ENCODE measurements at regions of chr2 and their contacts with region 1.

Region 1: GRCh38 chr2:34096562-34097171 is 497.6 kb upstream of the FAM98A start:
- DNase-seq: peak; percentile 32
- ATAC-seq: 0 out of 2 replicates have a peak, but pooled peaks have one; percentile 47
- H3K4me3 ChIP-seq: no peak overlapping the region
- H3K27ac ChIP-seq: no peak overlapping the region
- H3K4me1 ChIP-seq: no peaks in the 10 kb centered on the region
- H3K27me3 ChIP-seq: no peaks in the 10 kb centered on the region
- CTCF ChIP-seq: peak; percentile 15 to 78 (median 53); a peak in 4 of 6 replicates
- POLR2A ChIP-seq: no peak
- RAD21 ChIP-seq: peak; percentile 55

Region 2: GRCh38 chr2:33673937-33674336 is 422.7 kb before region 1 on chr2:
- CTCF ChIA-PET with region 1: no interaction called
- POLR2A ChIA-PET with region 1: no interaction called
- RAD21 ChIA-PET with region 1: no interaction called
- intact Hi-C with region 1: loop called (anchors 10 kb)
- DNase-seq: peak; percentile 13
- ATAC-seq: peak; percentile 43; the same call in 1 of the 2 replicates
- H3K4me3 ChIP-seq: no peak overlapping the region
- H3K27ac ChIP-seq: no peak overlapping the region
- H3K4me1 ChIP-seq: no peaks in the 10 kb centered on the region
- H3K27me3 ChIP-seq: no peaks in the 10 kb centered on the region; the same call in 1 of the 2 replicates
- CTCF ChIP-seq: peak; percentile 16 to 60 (median 21); a peak in 3 of 6 replicates
- POLR2A ChIP-seq: no peak
- RAD21 ChIP-seq: peak; percentile 59

Region 3: GRCh38 chr2:35410431-35411061 is 1313.9 kb after region 1 on chr2:
- CTCF ChIA-PET with region 1: no interaction called
- POLR2A ChIA-PET with region 1: no interaction called
- RAD21 ChIA-PET with region 1: no interaction called
- intact Hi-C with region 1: loop called (anchors 1 kb)
- DNase-seq: no peak
- ATAC-seq: no peak
- H3K4me3 ChIP-seq: no peak overlapping the region
- H3K27ac ChIP-seq: no peak overlapping the region
- H3K4me1 ChIP-seq: no peaks in the 10 kb centered on the region
- H3K27me3 ChIP-seq: no peaks in the 10 kb centered on the region
- CTCF ChIP-seq: peak in 2 of 3 experiments; percentile 77 to 82; a peak in 4 of 6 replicates
- POLR2A ChIP-seq: no peak
- RAD21 ChIP-seq: peak; percentile 35; the same call in 1 of the 2 replicates